Ascending aorta (tissue), 2 donors: ENCODE measurements at regions of chr9 and their contacts with region 1.

Region 1: DNA sequence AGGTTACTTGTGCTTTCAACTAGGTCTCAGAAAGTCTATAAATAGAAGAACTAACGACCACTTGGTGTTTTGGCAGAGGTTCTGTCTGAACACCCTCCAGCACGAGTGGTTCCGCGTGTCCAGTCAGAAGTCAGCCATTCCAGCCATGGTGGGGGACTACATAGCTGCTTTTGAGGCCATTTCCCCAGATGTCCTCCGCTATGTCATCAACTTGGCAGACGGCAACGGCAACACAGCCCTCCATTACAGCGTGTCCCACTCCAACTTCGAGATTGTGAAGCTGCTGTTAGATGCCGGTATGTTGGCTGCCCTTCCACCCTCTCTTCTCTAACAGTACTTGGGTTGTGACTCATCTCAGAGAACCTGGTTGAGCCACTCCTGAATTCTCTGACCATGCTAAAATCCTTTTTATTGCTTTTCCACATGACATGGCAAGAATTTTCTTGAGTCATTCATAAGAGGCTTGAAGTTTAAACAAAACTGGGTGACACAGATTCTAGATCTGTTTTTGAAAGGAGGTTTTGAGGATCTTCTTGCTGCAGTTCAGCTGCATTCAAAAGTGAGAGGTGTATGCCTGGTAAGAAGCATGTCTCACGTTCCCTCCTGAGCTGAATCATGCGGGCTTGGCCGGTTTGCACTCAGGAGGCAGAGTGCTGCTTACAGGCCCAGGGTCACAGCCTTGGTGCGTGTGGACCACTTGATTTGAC is 103.1 kb upstream of the DMRT1 start:
- DNase-seq: peak in 1 of 2 donors; percentile 93
- H3K4me3 ChIP-seq: peak overlapping the region in 1 of 2 donors; percentile 39
- H3K27ac ChIP-seq: peak overlapping the region; percentile 92 to 95
- H3K4me1 ChIP-seq: peaks cover 27 to 72% of the 10 kb centered on the region in 2 donors
- H3K27me3 ChIP-seq: no peaks in the 10 kb centered on the region
- CTCF ChIP-seq: no peak

Region 2: DNA sequence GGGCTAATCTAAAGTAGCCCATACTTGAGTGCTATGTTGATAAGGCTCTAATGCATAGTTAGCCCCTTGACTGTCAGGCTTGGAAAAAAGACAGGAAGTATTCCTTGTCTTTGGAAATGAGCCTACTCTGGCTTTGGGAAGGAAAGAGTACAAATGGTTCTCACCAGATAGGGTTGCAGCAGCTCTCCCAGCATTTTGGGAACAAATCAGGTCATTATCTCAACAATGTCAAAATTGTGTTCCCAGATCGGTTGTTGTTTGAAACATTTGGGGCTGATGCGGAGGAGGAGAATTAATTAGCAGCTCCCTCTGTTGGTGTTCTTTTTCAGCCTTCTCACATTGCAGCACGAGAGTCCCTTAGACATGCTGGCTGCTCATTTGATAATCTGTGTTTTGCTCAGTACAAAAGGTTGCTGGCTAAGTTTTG is 191.6 kb before region 1 on chr9:
- intact Hi-C with region 1: no loop called
- DNase-seq: no peak
- H3K4me3 ChIP-seq: peak overlapping the region in 1 of 2 donors; percentile 16
- H3K27ac ChIP-seq: peak overlapping the region in 1 of 2 donors; percentile 22
- H3K4me1 ChIP-seq: peaks cover 3 to 17% of the 10 kb centered on the region in 2 donors
- H3K27me3 ChIP-seq: no peaks in the 10 kb centered on the region
- CTCF ChIP-seq: peak in 1 of 3 experiments; percentile 46

Region 3: GRCh38 chr9:684054-684890 is 54.1 kb before region 1 on chr9:
- intact Hi-C with region 1: loop called (anchors 2 kb)
- DNase-seq: no peak
- H3K4me3 ChIP-seq: peak overlapping the region; percentile 39 to 59
- H3K27ac ChIP-seq: peak overlapping the region; percentile 86 to 95
- H3K4me1 ChIP-seq: peaks cover 5 to 34% of the 10 kb centered on the region in 2 donors
- H3K27me3 ChIP-seq: no peaks in the 10 kb centered on the region
- CTCF ChIP-seq: no peak

Region 4: GRCh38 chr9:715743-716400 is 22.5 kb before region 1 on chr9:
- intact Hi-C with region 1: loop called (anchors 2 kb)
- DNase-seq: no peak
- H3K4me3 ChIP-seq: peak overlapping the region; percentile 51 to 59
- H3K27ac ChIP-seq: peak overlapping the region; percentile 91 to 95
- H3K4me1 ChIP-seq: peaks cover 6 to 30% of the 10 kb centered on the region in 2 donors
- H3K27me3 ChIP-seq: no peaks in the 10 kb centered on the region
- CTCF ChIP-seq: no peak

Region 5: GRCh38 chr9:751137-752051 is 13.0 kb after region 1 on chr9:
- intact Hi-C with region 1: loop called (anchors 1 kb)
- DNase-seq: no peak
- H3K4me3 ChIP-seq: peak overlapping the region in 1 of 2 donors; percentile 37
- H3K27ac ChIP-seq: peak overlapping the region; percentile 92 to 95
- H3K4me1 ChIP-seq: peaks cover 25 to 45% of the 10 kb centered on the region in 2 donors
- H3K27me3 ChIP-seq: no peaks in the 10 kb centered on the region
- CTCF ChIP-seq: no peak

Region 6: DNA sequence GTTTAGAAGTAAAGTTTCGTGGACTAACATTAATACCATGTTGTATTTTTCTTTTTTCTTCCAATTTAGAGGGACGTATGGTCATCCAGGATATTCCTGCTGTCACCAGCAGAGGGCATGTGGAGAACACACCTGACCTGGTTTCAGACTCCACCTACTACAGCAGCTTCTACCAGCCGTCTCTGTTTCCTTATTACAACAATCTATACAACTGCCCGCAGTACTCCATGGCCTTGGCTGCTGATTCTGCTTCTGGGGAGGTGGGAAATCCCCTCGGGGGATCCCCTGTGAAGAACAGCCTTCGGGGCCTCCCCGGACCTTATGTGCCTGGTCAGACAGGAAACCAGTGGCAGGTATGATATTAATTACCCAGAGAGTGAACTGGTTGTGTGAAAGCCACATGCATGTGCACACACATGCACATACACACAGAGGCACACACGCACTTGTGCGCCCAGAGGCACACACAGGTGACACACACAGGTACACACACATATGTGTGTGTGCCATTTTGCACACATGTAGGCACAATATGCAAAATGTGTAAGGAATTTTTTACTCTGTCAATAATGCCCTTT is 155.6 kb after region 1 on chr9:
- intact Hi-C with region 1: no loop called
- DNase-seq: no peak
- H3K4me3 ChIP-seq: no peak overlapping the region
- H3K27ac ChIP-seq: no peak overlapping the region
- H3K4me1 ChIP-seq: no peaks in the 10 kb centered on the region
- H3K27me3 ChIP-seq: no peaks in the 10 kb centered on the region
- CTCF ChIP-seq: peak; percentile 35 to 54 (median 42)